Naive thymus-derived CD4-positive, alpha-beta T cell (primary cell): ENCODE measurements at regions of chrX and their contacts with region 1.

Region 1: DNA sequence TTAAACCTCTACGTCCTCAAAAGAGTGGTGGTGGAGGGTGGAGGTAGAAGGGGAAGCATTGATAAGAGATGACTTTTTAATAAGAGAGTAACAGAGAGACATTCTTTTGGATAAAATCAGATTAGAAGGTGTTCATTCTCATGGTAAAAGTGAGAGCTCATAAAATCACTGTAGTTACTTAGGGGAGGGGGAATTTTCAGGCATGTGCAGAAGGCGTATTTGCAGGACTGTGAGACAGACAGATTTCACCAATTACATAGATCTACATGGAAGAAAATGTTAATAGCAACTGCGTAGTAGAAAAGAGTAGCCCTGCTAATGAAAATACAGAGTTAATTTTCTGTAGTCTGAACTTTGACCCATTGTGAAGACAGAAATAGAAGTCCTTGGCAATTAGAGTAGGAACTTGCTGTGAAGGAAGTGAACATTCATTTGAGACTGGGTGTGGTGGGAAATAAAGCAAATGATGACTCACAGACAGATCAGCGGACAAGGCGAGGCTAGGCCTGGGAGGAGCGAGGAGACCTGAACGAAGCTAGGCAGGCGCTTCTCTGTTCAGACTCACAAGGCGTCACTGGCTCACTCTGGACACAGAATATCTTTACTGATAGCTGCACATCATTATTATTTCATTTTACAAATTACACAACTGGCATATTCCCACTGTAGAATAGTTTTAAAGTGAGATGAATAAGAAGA is 57.2 kb upstream of the FAM9C start:
- DNase-seq: peak in 1 of 9 donors; percentile 44
- ATAC-seq: peak; percentile 97
- H3K4me3 ChIP-seq: no peak overlapping the region
- H3K4me3 Mint-ChIP-seq: peak overlapping the region in 9 of 10 donors; percentile 18 to 75 (median 55)
- H3K27ac ChIP-seq: no peak overlapping the region
- H3K27ac Mint-ChIP-seq: peak overlapping the region in 8 of 9 donors; percentile 13 to 88 (median 74)
- H3K4me1 ChIP-seq: peaks cover 23 to 37% of the 10 kb centered on the region in 2 donors
- H3K4me1 Mint-ChIP-seq: peaks cover 22 to 60% (median 53%) of the 10 kb centered on the region in 7 donors
- H3K27me3 ChIP-seq: no peaks in the 10 kb centered on the region
- H3K27me3 Mint-ChIP-seq: no peaks in the 10 kb centered on the region

Region 2: DNA sequence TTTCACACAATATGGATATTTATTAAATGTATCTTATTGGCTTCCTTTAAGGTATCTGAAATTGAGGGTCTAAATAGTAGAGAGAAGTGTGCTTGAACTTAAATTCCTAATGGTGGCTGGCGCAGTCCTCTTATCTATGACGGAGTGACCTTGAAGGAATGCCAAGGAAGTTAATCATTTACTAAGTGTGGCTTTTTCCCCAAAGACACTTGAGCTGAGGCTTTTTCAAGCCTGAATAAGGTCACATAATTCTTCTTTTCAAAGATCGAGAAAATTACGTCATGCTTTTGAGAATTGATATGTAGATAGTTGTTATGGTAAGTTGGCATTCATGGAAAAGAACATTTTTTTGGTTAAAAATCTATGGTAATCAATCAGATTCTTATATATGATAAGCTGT is 322.1 kb before region 1 on chrX:
- CTCF ChIA-PET with region 1: no interaction called
- POLR2A ChIA-PET with region 1: no interaction called
- intact Hi-C with region 1: no loop called
- DNase-seq: no peak
- ATAC-seq: no peak
- H3K4me3 ChIP-seq: no peak overlapping the region
- H3K4me3 Mint-ChIP-seq: no peak overlapping the region
- H3K27ac ChIP-seq: no peak overlapping the region
- H3K27ac Mint-ChIP-seq: no peak overlapping the region
- H3K4me1 ChIP-seq: no peaks in the 10 kb centered on the region
- H3K4me1 Mint-ChIP-seq: no peaks in the 10 kb centered on the region
- H3K27me3 ChIP-seq: no peaks in the 10 kb centered on the region
- H3K27me3 Mint-ChIP-seq: peaks cover 0 to 19% (median 0%) of the 10 kb centered on the region in 5 donors

Region 3: GRCh38 chrX:13123857-13124345 is 22.3 kb after region 1 on chrX:
- CTCF ChIA-PET with region 1: no interaction called
- POLR2A ChIA-PET with region 1: interaction called, 3 read pairs
- intact Hi-C with region 1: loop called in 1 of 2 experiments (anchors 2 kb)
- DNase-seq: peak in 4 of 9 donors; percentile 14 to 33 (median 24)
- ATAC-seq: peak; percentile 29
- H3K4me3 ChIP-seq: peak overlapping the region; percentile 29
- H3K4me3 Mint-ChIP-seq: peak overlapping the region; percentile 18 to 76 (median 66)
- H3K27ac ChIP-seq: peak overlapping the region; percentile 52
- H3K27ac Mint-ChIP-seq: peak overlapping the region; percentile 84 to 95 (median 91)
- H3K4me1 ChIP-seq: peaks cover 19 to 25% of the 10 kb centered on the region in 2 donors
- H3K4me1 Mint-ChIP-seq: peaks cover 5 to 65% (median 48%) of the 10 kb centered on the region in 7 donors
- H3K27me3 ChIP-seq: no peaks in the 10 kb centered on the region
- H3K27me3 Mint-ChIP-seq: no peaks in the 10 kb centered on the region